Caco-2 (cell line): ENCODE measurements at regions of chr10 and their contacts with region 1.

Region 1: GRCh38 chr10:103888113-103888841 is 29.7 kb downstream of the STN1 start:
- DNase-seq: peak in 1 of 2 experiments; percentile 36
- H3K4me3 ChIP-seq: no peak overlapping the region
- H3K4me3 Mint-ChIP-seq: no peak overlapping the region
- H3K27ac Mint-ChIP-seq: peak overlapping the region; percentile 29
- H3K4me1 ChIP-seq: peaks cover 26% of the 10 kb centered on the region
- H3K4me1 Mint-ChIP-seq: peaks cover 20% of the 10 kb centered on the region
- H3K27me3 ChIP-seq: no peaks in the 10 kb centered on the region
- H3K27me3 Mint-ChIP-seq: no peaks in the 10 kb centered on the region
- CTCF ChIP-seq: peak; percentile 69 to 79

Region 2: GRCh38 chr10:103712570-103713498 is 175.4 kb before region 1 on chr10:
- CTCF ChIA-PET with region 1: interaction called, 18 read pairs
- POLR2A ChIA-PET with region 1: no interaction called
- intact Hi-C with region 1: loop called (anchors 1 kb)
- DNase-seq: peak; percentile 79 to 88
- H3K4me3 ChIP-seq: no peak overlapping the region
- H3K4me3 Mint-ChIP-seq: no peak overlapping the region
- H3K27ac Mint-ChIP-seq: no peak overlapping the region
- H3K4me1 ChIP-seq: peaks cover 21% of the 10 kb centered on the region
- H3K4me1 Mint-ChIP-seq: peaks cover 22% of the 10 kb centered on the region
- H3K27me3 ChIP-seq: no peaks in the 10 kb centered on the region
- H3K27me3 Mint-ChIP-seq: no peaks in the 10 kb centered on the region
- CTCF ChIP-seq: peak; percentile 82 to 93

Region 3: DNA sequence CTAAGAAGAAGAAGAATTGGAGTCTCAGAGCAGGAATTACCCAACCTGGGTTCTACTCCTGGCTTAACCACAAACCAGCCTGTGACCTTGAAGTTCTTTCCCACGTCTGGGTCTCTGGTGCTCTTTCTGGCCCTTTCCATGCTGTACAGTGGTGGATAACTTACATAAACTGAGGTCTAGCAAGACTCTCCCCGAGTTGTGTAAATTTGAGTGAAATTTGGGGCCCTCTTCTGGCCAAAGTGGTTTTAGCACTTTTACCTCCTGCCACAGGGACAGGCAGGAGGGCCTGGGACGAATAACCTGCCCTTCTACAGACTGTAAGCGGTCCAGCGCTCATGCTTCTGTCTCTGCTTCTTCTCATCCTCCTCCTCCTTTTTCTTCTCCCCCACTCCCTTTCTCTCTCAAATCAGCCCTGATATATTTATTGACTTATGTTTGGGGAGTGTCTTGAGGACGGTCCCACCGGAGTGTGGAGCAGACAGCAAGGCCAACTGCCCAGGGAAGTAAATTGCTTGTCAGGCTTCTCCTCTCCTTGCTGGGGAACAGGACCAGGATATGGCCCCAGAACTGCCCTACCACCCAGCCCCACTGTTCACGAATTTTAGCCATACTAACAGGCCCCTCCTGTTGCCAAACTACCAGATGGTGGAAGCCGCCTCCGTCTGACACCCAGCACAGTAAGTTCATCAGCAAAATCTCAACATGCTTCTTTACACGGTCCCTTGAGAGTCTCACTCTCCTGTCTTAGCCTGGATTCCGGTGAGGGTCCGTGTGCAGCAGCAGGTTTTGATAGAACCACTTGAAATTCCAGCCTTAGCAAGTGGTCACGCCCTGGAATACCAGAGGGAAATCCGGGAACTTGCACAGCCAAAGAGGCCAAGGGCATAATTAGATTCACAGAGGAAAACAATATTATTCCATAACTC is 28.9 kb before region 1 on chr10:
- CTCF ChIA-PET with region 1: interaction called, 5 read pairs
- POLR2A ChIA-PET with region 1: no interaction called
- intact Hi-C with region 1: loop called (anchors 1 kb)
- DNase-seq: peak; percentile 62 to 79
- H3K4me3 ChIP-seq: no peak overlapping the region
- H3K4me3 Mint-ChIP-seq: no peak overlapping the region
- H3K27ac Mint-ChIP-seq: no peak overlapping the region
- H3K4me1 ChIP-seq: peaks cover 6% of the 10 kb centered on the region
- H3K4me1 Mint-ChIP-seq: peaks cover 2% of the 10 kb centered on the region
- H3K27me3 ChIP-seq: no peaks in the 10 kb centered on the region
- H3K27me3 Mint-ChIP-seq: no peaks in the 10 kb centered on the region
- CTCF ChIP-seq: peak; percentile 71 to 82

Region 4: GRCh38 chr10:103966671-103967447 is 78.6 kb after region 1 on chr10 and contains the start of gene SLK:
- CTCF ChIA-PET with region 1: interaction called, 4 read pairs
- POLR2A ChIA-PET with region 1: no interaction called
- intact Hi-C with region 1: loop called (anchors 2 kb)
- DNase-seq: peak; percentile 76 to 89
- H3K4me3 ChIP-seq: peak within 1 kb of the TSS; percentile 95
- H3K4me3 Mint-ChIP-seq: peak within 1 kb of the TSS; percentile 86
- H3K27ac Mint-ChIP-seq: peak within 1 kb of the TSS; percentile 88
- H3K4me1 ChIP-seq: peaks cover 8% of the 10 kb centered on the region
- H3K4me1 Mint-ChIP-seq: peaks cover 9% of the 10 kb centered on the region
- H3K27me3 ChIP-seq: no peaks in the 10 kb centered on the region
- H3K27me3 Mint-ChIP-seq: no peaks in the 10 kb centered on the region
- CTCF ChIP-seq: no peak
- total RNA-seq, gene SLK: 35.6 and 39.5 TPM in 2 replicates

Region 5: DNA sequence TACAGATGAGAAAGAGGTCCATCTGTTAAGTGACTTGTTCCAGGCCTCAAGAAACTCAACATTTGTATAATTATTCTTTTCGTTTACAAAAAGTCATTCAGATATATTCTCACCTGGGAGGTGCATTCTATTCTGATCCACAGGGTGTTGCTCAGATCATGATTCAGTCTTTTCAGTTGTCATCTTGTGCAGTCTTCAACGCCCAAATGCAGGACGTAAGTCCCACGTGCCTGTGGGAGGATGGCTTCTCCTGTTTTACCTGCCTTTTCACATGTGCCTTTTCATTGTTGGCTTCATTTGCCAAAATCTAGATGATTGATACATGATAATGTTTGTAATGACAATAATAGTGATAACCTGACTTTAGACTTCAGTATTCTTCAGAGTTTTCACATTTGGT is 125.2 kb after region 1 on chr10:
- CTCF ChIA-PET with region 1: no interaction called
- POLR2A ChIA-PET with region 1: no interaction called
- intact Hi-C with region 1: loop called (anchors 5 kb)
- DNase-seq: no peak
- H3K4me3 ChIP-seq: no peak overlapping the region
- H3K4me3 Mint-ChIP-seq: no peak overlapping the region
- H3K27ac Mint-ChIP-seq: no peak overlapping the region
- H3K4me1 ChIP-seq: no peaks in the 10 kb centered on the region
- H3K4me1 Mint-ChIP-seq: no peaks in the 10 kb centered on the region
- H3K27me3 ChIP-seq: no peaks in the 10 kb centered on the region
- H3K27me3 Mint-ChIP-seq: no peaks in the 10 kb centered on the region
- CTCF ChIP-seq: no peak

Region 6: DNA sequence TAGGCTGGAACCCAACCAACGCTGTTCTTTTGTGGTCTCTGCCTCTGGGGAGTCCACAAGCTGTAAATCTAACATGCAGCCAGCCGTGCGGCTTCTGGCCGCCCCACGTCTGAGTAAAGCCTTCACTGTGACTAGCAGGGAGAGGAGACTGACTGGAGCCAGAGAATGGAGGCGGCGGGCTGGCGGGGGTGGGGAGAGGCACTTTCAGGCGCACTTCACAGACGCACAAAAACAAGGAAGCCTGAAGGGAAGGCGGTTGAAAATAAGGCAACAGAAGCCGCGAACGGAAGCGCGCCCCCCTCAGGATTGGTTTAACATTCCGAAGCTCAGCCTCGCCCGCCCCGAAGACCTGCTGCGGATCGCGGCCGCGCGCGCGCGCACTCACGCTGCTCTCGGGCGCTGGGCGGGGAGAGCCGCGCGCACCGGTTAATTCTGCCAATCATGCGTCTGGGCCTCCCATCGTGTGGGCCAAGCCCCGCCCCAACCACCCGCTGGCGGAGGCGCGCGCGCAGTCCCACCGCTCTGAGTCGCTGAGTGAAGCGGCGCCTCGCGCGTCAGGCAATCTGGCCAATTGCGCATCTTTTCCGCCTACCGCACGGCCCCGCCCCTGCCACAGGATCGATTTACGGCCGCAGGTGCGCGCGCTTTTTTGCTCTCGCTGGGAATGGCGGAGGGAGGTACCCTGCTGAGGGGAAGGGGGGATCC is 233.4 kb after region 1 on chr10 and contains the start of gene SFR1:
- CTCF ChIA-PET with region 1: interaction called, 11 read pairs
- POLR2A ChIA-PET with region 1: interaction called, 3 read pairs
- intact Hi-C with region 1: loop called (anchors 1 kb)
- DNase-seq: peak; percentile 98 to 99
- H3K4me3 ChIP-seq: peak within 1 kb of the TSS; percentile 92
- H3K4me3 Mint-ChIP-seq: peak within 1 kb of the TSS; percentile 79
- H3K27ac Mint-ChIP-seq: peak within 1 kb of the TSS; percentile 96
- H3K4me1 ChIP-seq: peaks cover 13% of the 10 kb centered on the region; the same call in 1 of the 2 replicates
- H3K4me1 Mint-ChIP-seq: no peaks in the 10 kb centered on the region
- H3K27me3 ChIP-seq: no peaks in the 10 kb centered on the region
- H3K27me3 Mint-ChIP-seq: no peaks in the 10 kb centered on the region
- CTCF ChIP-seq: peak; percentile 60 to 62
- total RNA-seq, gene SFR1: 7.3 and 8.7 TPM in 2 replicates

Region 7: DNA sequence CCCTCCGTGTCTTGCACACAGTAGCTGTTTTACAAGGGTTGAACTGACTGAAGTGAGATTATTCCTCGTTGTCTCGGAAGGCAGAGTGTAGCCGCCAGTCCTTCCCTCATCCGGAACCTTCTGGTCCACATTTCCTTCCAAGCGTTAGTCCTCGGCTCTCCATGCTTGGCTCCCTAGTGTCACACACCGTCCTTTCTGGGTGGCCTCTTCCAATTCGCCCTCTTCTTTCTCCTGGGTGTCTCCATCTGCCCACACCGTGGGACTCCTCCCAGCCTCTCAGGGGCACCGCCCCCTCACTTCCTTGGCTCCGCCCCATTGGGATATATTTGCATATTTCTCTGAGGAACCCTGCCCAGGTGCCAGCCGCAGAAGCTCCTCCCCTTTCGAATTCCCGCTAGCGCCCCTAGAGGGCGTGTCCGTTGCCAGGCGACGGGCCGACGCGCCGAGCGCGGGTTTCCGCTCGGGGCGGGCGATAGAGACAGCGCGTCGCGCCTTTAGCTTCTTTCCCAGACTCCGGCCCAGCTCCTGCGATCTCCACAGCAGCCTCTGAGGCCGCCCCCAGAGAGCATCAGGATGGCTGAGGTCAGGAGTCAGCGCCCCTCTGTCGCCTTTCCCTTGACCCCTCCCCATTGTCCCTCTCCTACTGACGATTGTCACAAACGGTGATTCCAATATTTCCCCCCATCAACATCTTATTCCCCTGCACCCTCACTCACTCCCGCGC is 465.2 kb after region 1 on chr10 and contains the start of gene CFAP58:
- CTCF ChIA-PET with region 1: no interaction called
- POLR2A ChIA-PET with region 1: no interaction called
- intact Hi-C with region 1: loop called (anchors 2 kb)
- DNase-seq: peak; percentile 93 to 94
- H3K4me3 ChIP-seq: peak within 1 kb of the TSS; percentile 27
- H3K4me3 Mint-ChIP-seq: no peak within 1 kb of the TSS
- H3K27ac Mint-ChIP-seq: no peak within 1 kb of the TSS
- H3K4me1 ChIP-seq: peaks cover 7% of the 10 kb centered on the region; the same call in 1 of the 2 replicates
- H3K4me1 Mint-ChIP-seq: no peaks in the 10 kb centered on the region
- H3K27me3 ChIP-seq: no peaks in the 10 kb centered on the region; the same call in 1 of the 2 replicates
- H3K27me3 Mint-ChIP-seq: peaks cover 9% of the 10 kb centered on the region
- CTCF ChIP-seq: peak; percentile 44 to 85
- total RNA-seq, gene CFAP58: not detected in 2 replicates